Panc1 (cell line): ENCODE measurements at regions of chr9 and their contacts with region 1.

Region 1: GRCh38 chr9:94554439-94555391 is at the start of gene PCAT7:
- DNase-seq: peak; percentile 25
- ATAC-seq: peak; percentile 99
- H3K4me3 ChIP-seq: peak within 1 kb of the TSS; percentile 56
- H3K27ac ChIP-seq: peak within 1 kb of the TSS; percentile 73; the same call in 1 of the 2 replicates
- H3K4me1 ChIP-seq: no peaks in the 10 kb centered on the region; the same call in 1 of the 2 replicates
- H3K27me3 ChIP-seq: no peaks in the 10 kb centered on the region
- CTCF ChIP-seq: peak; percentile 74
- total RNA-seq, gene PCAT7: 0.59 TPM

Region 2: DNA sequence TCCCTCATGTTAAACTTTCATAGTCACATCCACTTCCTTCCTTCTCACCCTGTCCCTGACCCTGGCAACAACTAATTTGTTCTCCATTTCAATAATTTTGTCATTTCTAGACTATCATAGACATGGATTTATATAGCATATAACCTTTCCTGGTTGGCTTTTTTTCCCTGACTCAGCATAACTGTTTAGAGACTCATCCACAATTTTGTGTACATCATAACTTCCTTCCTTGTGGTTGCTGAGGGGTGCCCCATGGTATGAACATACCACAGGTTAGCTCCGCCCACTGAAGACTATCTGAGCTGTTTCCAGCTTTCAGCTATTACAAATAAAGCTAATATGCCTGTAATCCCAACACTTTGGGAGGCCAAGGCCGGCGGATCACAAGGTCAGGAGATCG is 841.0 kb before region 1 on chr9:
- CTCF ChIA-PET with region 1: no interaction called
- POLR2A ChIA-PET with region 1: no interaction called
- in situ Hi-C with region 1: no loop called
- intact Hi-C with region 1: no loop called
- DNase-seq: no peak
- ATAC-seq: no peak
- H3K4me3 ChIP-seq: no peak overlapping the region
- H3K27ac ChIP-seq: no peak overlapping the region
- H3K4me1 ChIP-seq: no peaks in the 10 kb centered on the region
- H3K27me3 ChIP-seq: no peaks in the 10 kb centered on the region
- CTCF ChIP-seq: no peak

Region 3: GRCh38 chr9:94538908-94539307 is 15.8 kb before region 1 on chr9:
- CTCF ChIA-PET with region 1: no interaction called
- POLR2A ChIA-PET with region 1: no interaction called
- in situ Hi-C with region 1: no loop called
- intact Hi-C with region 1: no loop called
- DNase-seq: no peak
- ATAC-seq: no peak
- H3K4me3 ChIP-seq: no peak overlapping the region
- H3K27ac ChIP-seq: no peak overlapping the region
- H3K4me1 ChIP-seq: no peaks in the 10 kb centered on the region
- H3K27me3 ChIP-seq: no peaks in the 10 kb centered on the region
- CTCF ChIP-seq: no peak

Region 4: DNA sequence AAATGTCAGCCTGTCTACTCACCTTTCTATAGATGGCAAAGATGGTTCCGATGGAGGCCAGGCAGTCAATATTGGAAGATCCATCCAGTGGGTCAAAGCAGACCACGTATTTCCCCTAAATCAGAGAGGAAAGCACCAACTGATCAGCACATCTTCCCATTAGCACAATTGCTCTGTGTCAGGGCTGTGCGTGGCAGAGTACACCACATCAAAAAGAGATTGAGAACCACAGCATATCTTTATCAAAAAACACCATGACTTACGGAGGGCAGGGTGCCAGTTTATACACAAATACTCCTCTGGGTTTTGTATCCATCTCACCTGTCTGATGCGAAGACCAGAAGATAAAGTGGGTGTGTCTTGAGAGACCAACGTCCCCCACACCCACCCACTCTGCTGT is 29.8 kb after region 1 on chr9:
- CTCF ChIA-PET with region 1: interaction called, 10 read pairs
- POLR2A ChIA-PET with region 1: no interaction called
- in situ Hi-C with region 1: no loop called
- intact Hi-C with region 1: no loop called
- DNase-seq: no peak
- ATAC-seq: no peak
- H3K4me3 ChIP-seq: no peak overlapping the region
- H3K27ac ChIP-seq: no peak overlapping the region
- H3K4me1 ChIP-seq: no peaks in the 10 kb centered on the region
- H3K27me3 ChIP-seq: no peaks in the 10 kb centered on the region
- CTCF ChIP-seq: no peak

Region 5: GRCh38 chr9:94603259-94604160 is 48.8 kb after region 1 on chr9:
- CTCF ChIA-PET with region 1: interaction called, 6 read pairs
- POLR2A ChIA-PET with region 1: no interaction called
- in situ Hi-C with region 1: no loop called
- intact Hi-C with region 1: loop called (anchors 5 kb)
- DNase-seq: peak; percentile 24
- ATAC-seq: peak; percentile 90
- H3K4me3 ChIP-seq: no peak overlapping the region
- H3K27ac ChIP-seq: no peak overlapping the region
- H3K4me1 ChIP-seq: no peaks in the 10 kb centered on the region; the same call in 1 of the 2 replicates
- H3K27me3 ChIP-seq: no peaks in the 10 kb centered on the region
- CTCF ChIP-seq: peak; percentile 80